ENCODE measurements at regions of chr3 and their contacts with region 1.

Region 1: GRCh38 chr3:72996473-72997333 is at the start of gene PPP4R2:
- DNase-seq: peak; percentile 86
- H3K4me3 ChIP-seq: peak within 1 kb of the TSS; percentile 71 to 84 (median 82)
- H3K27ac ChIP-seq: peak within 1 kb of the TSS; percentile 69
- H3K4me1 ChIP-seq: peaks cover 29% of the 10 kb centered on the region
- H3K27me3 ChIP-seq: no peaks in the 10 kb centered on the region
- CTCF ChIP-seq: peak in 1 of 2 donors; percentile 2
- total RNA-seq, gene PPP4R2: 57.0 to 74.4 TPM

Region 2: GRCh38 chr3:72549761-72550581 is 446.7 kb before region 1 on chr3:
- CTCF ChIA-PET with region 1: no interaction called
- dilution Hi-C with region 1: no loop called
- in situ Hi-C with region 1: no loop called
- intact Hi-C with region 1: no loop called
- DNase-seq: no peak
- H3K4me3 ChIP-seq: no peak overlapping the region
- H3K27ac ChIP-seq: no peak overlapping the region
- H3K4me1 ChIP-seq: no peaks in the 10 kb centered on the region
- H3K27me3 ChIP-seq: no peaks in the 10 kb centered on the region
- CTCF ChIP-seq: no peak

Region 3: DNA sequence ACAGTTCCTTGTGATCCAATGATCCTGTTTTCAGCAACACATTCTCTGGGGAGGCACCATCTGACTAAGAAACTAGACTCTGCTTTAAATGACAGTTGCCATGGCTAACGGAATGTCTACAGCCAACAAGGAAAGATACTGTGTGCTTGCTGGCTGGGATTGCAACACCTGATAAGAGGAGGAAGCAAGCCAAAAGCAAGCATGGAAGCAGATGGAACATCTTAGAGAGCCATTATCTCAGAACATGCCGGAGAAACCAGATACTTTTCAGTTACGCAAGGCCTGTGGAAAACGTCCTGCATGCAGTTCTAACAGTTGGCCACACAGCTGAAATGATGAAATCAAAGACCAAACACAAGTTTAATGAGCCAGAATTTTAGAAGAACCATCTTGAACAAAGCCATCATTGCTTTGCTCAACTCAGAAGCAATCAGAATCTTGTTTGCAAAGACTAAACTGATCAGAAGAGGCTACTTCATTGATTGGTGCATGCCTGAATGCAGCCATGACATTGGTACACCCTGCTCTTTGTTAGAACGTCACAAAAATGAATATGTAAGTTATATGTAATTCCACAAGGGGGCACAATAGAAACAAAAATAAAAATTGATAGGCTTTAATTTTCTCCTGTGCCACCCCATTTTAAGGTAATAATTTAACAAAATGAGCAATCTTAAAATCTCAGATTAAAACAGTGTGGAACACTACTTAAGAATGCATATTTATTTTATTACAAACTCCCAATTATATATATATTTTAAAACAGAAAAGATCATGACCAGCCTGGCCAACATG is 58.0 kb before region 1 on chr3:
- CTCF ChIA-PET with region 1: interaction called, 4 read pairs
- dilution Hi-C with region 1: no loop called
- in situ Hi-C with region 1: no loop called
- intact Hi-C with region 1: loop called (anchors 1 kb)
- DNase-seq: peak; percentile 63
- H3K4me3 ChIP-seq: no peak overlapping the region
- H3K27ac ChIP-seq: no peak overlapping the region
- H3K4me1 ChIP-seq: peaks cover 9% of the 10 kb centered on the region
- H3K27me3 ChIP-seq: no peaks in the 10 kb centered on the region
- CTCF ChIP-seq: peak; percentile 39 to 61

Region 4: GRCh38 chr3:72973786-72974185 is 22.9 kb before region 1 on chr3:
- CTCF ChIA-PET with region 1: interaction called, 12 read pairs
- dilution Hi-C with region 1: no loop called
- in situ Hi-C with region 1: no loop called
- intact Hi-C with region 1: no loop called
- DNase-seq: no peak
- H3K4me3 ChIP-seq: no peak overlapping the region
- H3K27ac ChIP-seq: no peak overlapping the region
- H3K4me1 ChIP-seq: peaks cover 13% of the 10 kb centered on the region
- H3K27me3 ChIP-seq: no peaks in the 10 kb centered on the region
- CTCF ChIP-seq: no peak

Region 5: GRCh38 chr3:73009750-73010149 is 13.0 kb after region 1 on chr3:
- CTCF ChIA-PET with region 1: no interaction called
- dilution Hi-C with region 1: no loop called
- in situ Hi-C with region 1: no loop called
- intact Hi-C with region 1: loop called (anchors 1 kb)
- DNase-seq: no peak
- H3K4me3 ChIP-seq: no peak overlapping the region
- H3K27ac ChIP-seq: no peak overlapping the region
- H3K4me1 ChIP-seq: peaks cover 3% of the 10 kb centered on the region
- H3K27me3 ChIP-seq: no peaks in the 10 kb centered on the region
- CTCF ChIP-seq: no peak

Region 6: DNA sequence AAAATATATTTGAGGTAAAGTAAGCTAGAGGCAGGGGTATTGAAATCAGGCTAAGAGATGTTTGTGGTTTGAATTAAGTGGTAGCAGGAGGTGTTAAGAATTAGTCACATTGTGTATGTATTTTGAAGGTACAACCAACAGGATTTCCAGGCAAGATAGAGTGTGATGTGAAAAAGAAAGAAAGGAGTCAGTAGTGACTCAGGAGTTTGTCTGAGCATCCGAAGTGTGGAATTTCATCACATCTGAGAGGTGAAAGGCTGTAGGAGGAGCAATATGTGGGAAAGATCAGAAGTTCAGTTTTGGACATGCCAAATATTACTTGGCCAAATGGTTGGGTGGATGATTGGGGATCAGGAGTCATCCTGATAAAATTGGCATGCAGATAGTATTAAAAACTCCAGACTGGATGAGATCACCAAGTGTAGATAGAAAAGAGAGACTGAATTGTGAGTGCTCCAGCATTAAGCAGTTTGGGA is 32.7 kb after region 1 on chr3:
- CTCF ChIA-PET with region 1: no interaction called
- dilution Hi-C with region 1: no loop called
- in situ Hi-C with region 1: no loop called
- intact Hi-C with region 1: loop called (anchors 2 kb)
- DNase-seq: peak; percentile 94
- H3K4me3 ChIP-seq: no peak overlapping the region
- H3K27ac ChIP-seq: peak overlapping the region; percentile 45
- H3K4me1 ChIP-seq: peaks cover 27% of the 10 kb centered on the region
- H3K27me3 ChIP-seq: no peaks in the 10 kb centered on the region
- CTCF ChIP-seq: no peak

Region 7: DNA sequence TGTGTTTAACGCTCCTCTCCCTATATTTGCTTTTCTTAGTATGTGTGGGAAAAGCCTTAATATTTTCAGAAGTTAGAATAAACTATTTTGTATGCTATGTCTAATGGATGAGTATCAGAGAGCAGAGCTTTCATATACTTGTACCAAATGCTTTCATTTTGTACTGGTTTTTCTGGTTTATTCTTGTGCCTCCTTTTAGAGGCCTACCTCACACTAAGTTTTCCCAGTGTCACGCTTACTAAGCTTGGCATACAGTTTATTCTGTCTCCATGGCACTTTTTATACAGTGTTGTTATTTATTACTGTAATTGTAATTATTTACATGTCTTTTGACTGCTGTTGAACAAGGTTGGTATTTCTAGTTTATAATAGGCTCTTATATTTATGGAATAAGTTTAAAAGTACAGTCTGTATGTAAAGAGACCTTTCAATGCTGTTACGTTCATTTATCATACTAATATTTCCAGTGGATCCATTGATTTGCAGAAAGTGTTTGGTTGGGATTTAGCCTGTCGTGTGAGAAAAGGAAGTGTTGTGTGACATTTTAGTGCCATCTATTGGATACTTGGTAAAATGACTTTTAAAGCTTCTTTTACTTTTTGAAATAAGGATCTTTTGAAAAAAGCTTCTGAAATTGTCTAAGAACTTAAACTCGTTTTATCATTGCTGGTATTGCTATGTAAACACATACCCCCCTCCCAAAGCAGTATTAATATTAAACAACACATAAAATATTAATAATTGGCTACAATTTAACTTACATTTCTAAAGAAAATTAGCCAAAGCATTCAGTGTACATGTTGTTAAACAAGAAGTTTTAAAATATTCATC is 59.5 kb after region 1 on chr3:
- CTCF ChIA-PET with region 1: no interaction called
- dilution Hi-C with region 1: no loop called
- in situ Hi-C with region 1: no loop called
- intact Hi-C with region 1: loop called (anchors 5 kb)
- DNase-seq: peak; percentile 19
- H3K4me3 ChIP-seq: no peak overlapping the region
- H3K27ac ChIP-seq: peak overlapping the region; percentile 57
- H3K4me1 ChIP-seq: no peaks in the 10 kb centered on the region
- H3K27me3 ChIP-seq: no peaks in the 10 kb centered on the region
- CTCF ChIP-seq: peak; percentile 46 to 48

Measured in mammary epithelial cell (primary cell).